Gastrocnemius medialis (tissue), 4 donors: ENCODE measurements at regions of chr10 and their contacts with region 1.

Region 1: DNA sequence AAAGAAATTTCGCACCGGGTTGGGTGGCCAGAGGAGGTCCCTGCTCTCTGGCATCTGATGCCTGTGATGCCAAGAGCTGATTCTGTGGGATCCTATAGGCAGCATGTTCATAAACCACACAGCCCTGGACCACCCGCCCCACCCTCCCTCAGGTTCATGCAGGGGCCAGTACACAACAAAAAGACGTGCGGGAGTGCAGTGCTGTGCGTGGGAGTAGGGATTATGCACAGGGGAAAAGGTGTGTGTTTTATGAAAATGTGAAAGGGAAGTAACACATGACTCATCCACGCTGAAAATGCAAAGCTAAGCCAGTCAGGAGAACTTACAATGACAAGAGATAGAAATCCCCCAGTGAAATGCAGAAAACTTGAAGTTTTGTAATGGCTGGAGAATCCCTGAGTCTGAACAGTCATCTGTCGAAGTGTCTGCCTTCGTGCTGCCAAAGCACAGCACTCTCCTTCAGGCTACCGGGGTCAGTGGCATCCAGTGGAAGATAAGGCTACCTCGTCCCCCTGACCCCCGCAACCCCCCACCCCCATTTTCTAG is 1.1 kb downstream of the KIAA1217 start:
- DNase-seq: peak in 1 of 2 donors; percentile 37
- ATAC-seq: peak in 1 of 2 donors; percentile 10
- H3K4me3 ChIP-seq: peak overlapping the region; percentile 62 to 86 (median 69)
- H3K27ac ChIP-seq: peak overlapping the region; percentile 92 to 96 (median 94)
- H3K4me1 ChIP-seq: peaks cover 73% of the 10 kb centered on the region in 2 donors
- H3K27me3 ChIP-seq: no peaks in the 10 kb centered on the region
- CTCF ChIP-seq: no peak
- POLR2A ChIP-seq: no peak

Region 2: GRCh38 chr10:22340362-22341189 is 1869.4 kb before region 1 on chr10:
- in situ Hi-C with region 1: no loop called
- intact Hi-C with region 1: no loop called
- DNase-seq: peak in 1 of 2 donors; percentile 52
- ATAC-seq: peak; percentile 79 to 80
- H3K4me3 ChIP-seq: peak overlapping the region; percentile 73 to 85 (median 76)
- H3K27ac ChIP-seq: peak overlapping the region; percentile 84 to 89 (median 86)
- H3K4me1 ChIP-seq: peaks cover 13 to 25% of the 10 kb centered on the region in 2 donors
- H3K27me3 ChIP-seq: peaks cover 89 to 90% (median 90%) of the 10 kb centered on the region in 3 donors
- CTCF ChIP-seq: peak in 1 of 5 experiments; percentile 7
- POLR2A ChIP-seq: peak; percentile 41 to 46

Region 3: GRCh38 chr10:24118246-24118645 is 91.8 kb before region 1 on chr10:
- in situ Hi-C with region 1: no loop called
- intact Hi-C with region 1: loop called (anchors 5 kb)
- DNase-seq: no peak
- ATAC-seq: no peak
- H3K4me3 ChIP-seq: peak overlapping the region; percentile 14 to 45 (median 36)
- H3K27ac ChIP-seq: peak overlapping the region; percentile 90 to 96 (median 92)
- H3K4me1 ChIP-seq: peaks cover 30 to 42% of the 10 kb centered on the region in 2 donors
- H3K27me3 ChIP-seq: no peaks in the 10 kb centered on the region
- CTCF ChIP-seq: no peak
- POLR2A ChIP-seq: peak; percentile 20 to 38

Region 4: GRCh38 chr10:24383681-24384106 is 173.7 kb after region 1 on chr10:
- in situ Hi-C with region 1: no loop called
- intact Hi-C with region 1: loop called (anchors 5 kb)
- DNase-seq: peak; percentile 96 to 98
- ATAC-seq: peak; percentile 88 to 93
- H3K4me3 ChIP-seq: peak overlapping the region in 3 of 4 donors; percentile 13 to 34 (median 29)
- H3K27ac ChIP-seq: peak overlapping the region; percentile 89 to 98 (median 94)
- H3K4me1 ChIP-seq: peaks cover 40 to 56% of the 10 kb centered on the region in 2 donors
- H3K27me3 ChIP-seq: no peaks in the 10 kb centered on the region
- CTCF ChIP-seq: peak; percentile 34 to 77 (median 65)
- POLR2A ChIP-seq: peak; percentile 54 to 80

Region 5: GRCh38 chr10:24503461-24504320 is 293.7 kb after region 1 on chr10:
- in situ Hi-C with region 1: loop called in 2 of 4 experiments (anchors 25 kb)
- intact Hi-C with region 1: no loop called
- DNase-seq: no peak
- ATAC-seq: peak; percentile 33 to 60
- H3K4me3 ChIP-seq: no peak overlapping the region
- H3K27ac ChIP-seq: peak overlapping the region; percentile 5 to 45 (median 17)
- H3K4me1 ChIP-seq: peaks cover 3 to 6% of the 10 kb centered on the region in 2 donors
- H3K27me3 ChIP-seq: no peaks in the 10 kb centered on the region
- CTCF ChIP-seq: peak; percentile 17 to 57 (median 53)
- POLR2A ChIP-seq: no peak

Region 6: GRCh38 chr10:25016376-25017154 is 806.5 kb after region 1 on chr10 and contains the start of gene THNSL1:
- in situ Hi-C with region 1: no loop called
- intact Hi-C with region 1: loop called (anchors 10 kb)
- DNase-seq: peak; percentile 97 to 99
- ATAC-seq: peak; percentile 94 to 98
- H3K4me3 ChIP-seq: peak within 1 kb of the TSS; percentile 78 to 87 (median 83)
- H3K27ac ChIP-seq: peak within 1 kb of the TSS; percentile 90 to 94 (median 92)
- H3K4me1 ChIP-seq: peaks cover 13 to 16% of the 10 kb centered on the region in 2 donors
- H3K27me3 ChIP-seq: no peaks in the 10 kb centered on the region
- CTCF ChIP-seq: no peak
- POLR2A ChIP-seq: peak; percentile 80 to 94
- total RNA-seq, gene THNSL1: 0.82 to 2.0 (median 1.7) TPM

Region 7: GRCh38 chr10:25169740-25170139 is 959.7 kb after region 1 on chr10:
- in situ Hi-C with region 1: no loop called
- intact Hi-C with region 1: no loop called
- DNase-seq: no peak
- ATAC-seq: no peak
- H3K4me3 ChIP-seq: no peak overlapping the region
- H3K27ac ChIP-seq: no peak overlapping the region
- H3K4me1 ChIP-seq: no peaks in the 10 kb centered on the region
- H3K27me3 ChIP-seq: peaks cover 0 to 32% (median 12%) of the 10 kb centered on the region in 3 donors
- CTCF ChIP-seq: no peak
- POLR2A ChIP-seq: no peak

Region 8: GRCh38 chr10:25639646-25640045 is 1429.6 kb after region 1 on chr10:
- in situ Hi-C with region 1: no loop called
- intact Hi-C with region 1: no loop called
- DNase-seq: no peak
- ATAC-seq: no peak
- H3K4me3 ChIP-seq: no peak overlapping the region
- H3K27ac ChIP-seq: no peak overlapping the region
- H3K4me1 ChIP-seq: no peaks in the 10 kb centered on the region
- H3K27me3 ChIP-seq: no peaks in the 10 kb centered on the region
- CTCF ChIP-seq: no peak
- POLR2A ChIP-seq: no peak